Natural killer cell (primary cell): ENCODE measurements at regions of chr11 and their contacts with region 1.

Region 1: DNA sequence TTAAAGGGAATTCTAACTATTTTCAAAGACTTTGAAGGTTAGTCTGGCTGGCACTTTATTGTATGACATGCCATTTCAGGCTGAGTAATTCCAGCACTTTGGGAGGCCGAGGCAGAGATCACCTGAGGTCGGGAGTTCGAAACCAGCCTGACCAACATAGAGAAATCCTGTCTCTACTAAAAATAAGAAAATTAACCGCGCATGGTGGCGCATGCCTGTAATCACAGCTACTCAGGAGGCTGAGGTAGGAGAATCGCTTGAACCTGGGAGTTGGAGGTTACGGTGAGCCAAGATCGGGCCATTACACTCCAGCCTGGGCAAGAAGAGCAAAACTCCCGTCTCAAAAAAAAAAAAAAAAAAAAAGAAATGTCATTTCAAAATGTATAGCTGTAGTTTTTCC is 95.6 kb downstream of the RDX start:
- DNase-seq: no peak
- ATAC-seq: no peak
- H3K4me3 ChIP-seq: no peak overlapping the region
- H3K4me3 Mint-ChIP-seq: no peak overlapping the region
- H3K27ac ChIP-seq: no peak overlapping the region
- H3K27ac Mint-ChIP-seq: no peak overlapping the region
- H3K4me1 ChIP-seq: no peaks in the 10 kb centered on the region
- H3K4me1 Mint-ChIP-seq: no peaks in the 10 kb centered on the region
- H3K27me3 ChIP-seq: no peaks in the 10 kb centered on the region
- H3K27me3 Mint-ChIP-seq: peaks cover 0 to 5% of the 10 kb centered on the region in 2 donors
- CTCF ChIP-seq: no peak

Region 2: GRCh38 chr11:110376711-110377324 is 176.0 kb after region 1 on chr11:
- intact Hi-C with region 1: loop called (anchors 1 kb)
- DNase-seq: peak in 1 of 2 donors; percentile 71
- ATAC-seq: peak; percentile 59 to 70 (median 68)
- H3K4me3 ChIP-seq: no peak overlapping the region
- H3K4me3 Mint-ChIP-seq: no peak overlapping the region
- H3K27ac ChIP-seq: no peak overlapping the region
- H3K27ac Mint-ChIP-seq: no peak overlapping the region
- H3K4me1 ChIP-seq: no peaks in the 10 kb centered on the region
- H3K4me1 Mint-ChIP-seq: peaks cover 5 to 6% of the 10 kb centered on the region in 2 donors
- H3K27me3 ChIP-seq: no peaks in the 10 kb centered on the region
- H3K27me3 Mint-ChIP-seq: peaks cover 7 to 9% of the 10 kb centered on the region in 2 donors
- CTCF ChIP-seq: peak; percentile 61

Region 3: DNA sequence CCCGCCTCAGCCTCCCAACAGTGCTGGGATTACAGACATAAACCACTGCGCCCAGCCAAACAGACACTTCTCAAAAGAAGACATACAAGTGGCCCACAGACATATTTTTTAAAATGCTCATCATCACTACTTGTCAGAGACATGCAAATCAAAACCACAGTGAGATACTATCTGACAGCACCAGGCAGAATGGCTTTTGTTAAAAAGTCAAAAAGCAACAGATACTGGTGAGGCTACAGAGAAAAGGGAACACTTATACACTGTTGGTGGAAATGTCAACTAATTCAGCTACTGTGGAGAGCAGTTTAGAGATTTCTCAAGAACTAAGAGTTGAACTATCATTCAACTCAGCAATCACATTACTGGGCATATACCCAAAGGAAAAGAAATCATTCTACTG is 444.4 kb after region 1 on chr11:
- intact Hi-C with region 1: no loop called
- DNase-seq: no peak
- ATAC-seq: no peak
- H3K4me3 ChIP-seq: no peak overlapping the region
- H3K4me3 Mint-ChIP-seq: no peak overlapping the region
- H3K27ac ChIP-seq: no peak overlapping the region
- H3K27ac Mint-ChIP-seq: no peak overlapping the region
- H3K4me1 ChIP-seq: no peaks in the 10 kb centered on the region
- H3K4me1 Mint-ChIP-seq: no peaks in the 10 kb centered on the region
- H3K27me3 ChIP-seq: no peaks in the 10 kb centered on the region
- H3K27me3 Mint-ChIP-seq: no peaks in the 10 kb centered on the region
- CTCF ChIP-seq: no peak